Gastrocnemius medialis (tissue), 4 donors: ENCODE measurements at regions of chr1 and their contacts with region 1.

Region 1: GRCh38 chr1:119662034-119662437 is 14.0 kb upstream of the ZNF697 start:
- DNase-seq: no peak
- ATAC-seq: no peak
- H3K4me3 ChIP-seq: no peak overlapping the region
- H3K27ac ChIP-seq: no peak overlapping the region
- H3K4me1 ChIP-seq: peaks cover 0 to 4% of the 10 kb centered on the region in 2 donors
- H3K27me3 ChIP-seq: no peaks in the 10 kb centered on the region
- CTCF ChIP-seq: no peak
- POLR2A ChIP-seq: no peak

Region 2: GRCh38 chr1:119613769-119614720 is 48.0 kb before region 1 on chr1:
- in situ Hi-C with region 1: loop called in 1 of 4 experiments (anchors 5 kb)
- intact Hi-C with region 1: loop called (anchors 1 kb)
- DNase-seq: peak; percentile 63 to 77
- ATAC-seq: peak; percentile 89 to 95
- H3K4me3 ChIP-seq: no peak overlapping the region
- H3K27ac ChIP-seq: no peak overlapping the region
- H3K4me1 ChIP-seq: peaks cover 9 to 11% of the 10 kb centered on the region in 2 donors
- H3K27me3 ChIP-seq: no peaks in the 10 kb centered on the region
- CTCF ChIP-seq: peak; percentile 62 to 94 (median 83)
- POLR2A ChIP-seq: no peak

Region 3: GRCh38 chr1:119623678-119624077 is 38.4 kb before region 1 on chr1:
- in situ Hi-C with region 1: loop called in 2 of 4 experiments (anchors 5 kb)
- intact Hi-C with region 1: loop called (anchors 5 kb)
- DNase-seq: no peak
- ATAC-seq: no peak
- H3K4me3 ChIP-seq: no peak overlapping the region
- H3K27ac ChIP-seq: no peak overlapping the region
- H3K4me1 ChIP-seq: peaks cover 23 to 30% of the 10 kb centered on the region in 2 donors
- H3K27me3 ChIP-seq: no peaks in the 10 kb centered on the region
- CTCF ChIP-seq: no peak
- POLR2A ChIP-seq: no peak

Region 4: GRCh38 chr1:119631433-119632102 is 30.5 kb before region 1 on chr1:
- in situ Hi-C with region 1: no loop called
- intact Hi-C with region 1: loop called (anchors 5 kb)
- DNase-seq: peak; percentile 58 to 88
- ATAC-seq: peak; percentile 78 to 88
- H3K4me3 ChIP-seq: peak overlapping the region; percentile 48 to 57 (median 54)
- H3K27ac ChIP-seq: peak overlapping the region; percentile 82 to 87 (median 86)
- H3K4me1 ChIP-seq: peaks cover 47 to 65% of the 10 kb centered on the region in 2 donors
- H3K27me3 ChIP-seq: no peaks in the 10 kb centered on the region
- CTCF ChIP-seq: peak in 1 of 5 experiments; percentile 18
- POLR2A ChIP-seq: no peak

Region 5: GRCh38 chr1:119675349-119676345 is 13.6 kb after region 1 on chr1:
- in situ Hi-C with region 1: no loop called
- intact Hi-C with region 1: loop called (anchors 1 kb)
- DNase-seq: peak; percentile 57 to 71
- ATAC-seq: peak; percentile 83 to 90
- H3K4me3 ChIP-seq: peak overlapping the region; percentile 32 to 46 (median 42)
- H3K27ac ChIP-seq: peak overlapping the region in 1 of 4 donors; percentile 34
- H3K4me1 ChIP-seq: no peaks in the 10 kb centered on the region
- H3K27me3 ChIP-seq: no peaks in the 10 kb centered on the region
- CTCF ChIP-seq: peak; percentile 75 to 90 (median 87)
- POLR2A ChIP-seq: no peak